ENCODE measurements at regions of chr16 and their contacts with region 1.

Region 1: DNA sequence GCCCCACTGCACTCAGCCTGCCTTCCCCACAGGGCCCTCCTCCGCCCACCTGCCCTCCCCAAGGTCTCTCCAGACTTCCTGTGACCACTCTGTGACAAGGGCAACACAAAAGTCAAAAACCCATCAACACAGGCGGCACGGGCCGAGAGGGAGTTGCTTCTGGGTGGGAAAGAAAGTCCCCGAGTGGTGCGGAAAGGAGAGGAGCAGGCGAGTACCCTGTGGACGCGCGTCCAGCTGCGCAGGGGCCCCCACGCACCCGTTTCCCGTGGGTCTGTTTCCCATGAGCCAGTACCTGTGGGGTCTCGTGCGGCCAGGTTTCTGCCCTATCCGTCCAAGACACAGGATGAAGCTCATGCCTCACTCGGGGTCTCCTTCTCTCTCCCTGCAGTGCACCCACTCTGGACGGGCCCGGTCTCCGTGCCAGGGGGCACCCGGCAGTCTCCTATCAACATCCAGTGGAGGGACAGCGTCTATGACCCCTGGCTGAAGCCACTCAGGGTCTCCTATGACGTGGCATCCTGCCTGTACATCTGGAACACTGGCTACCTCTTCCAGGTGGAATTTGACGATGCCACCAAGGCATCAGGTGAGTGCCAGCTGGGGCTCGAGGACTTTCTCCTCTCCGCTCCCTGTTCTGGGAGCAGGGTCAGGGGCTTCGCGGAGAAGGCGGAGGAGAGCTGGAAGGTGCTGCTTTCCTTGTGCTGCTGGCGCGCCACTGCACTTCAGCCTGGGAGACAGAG is 12.2 kb downstream of the CD2BP2 start:
- DNase-seq: no peak
- H3K4me3 ChIP-seq: no peak overlapping the region
- H3K27ac ChIP-seq: no peak overlapping the region
- H3K27me3 ChIP-seq: no peaks in the 10 kb centered on the region
- CTCF ChIP-seq: no peak

Region 2: GRCh38 chr16:30005341-30006094 is 337.4 kb before region 1 on chr16:
- CTCF ChIA-PET with region 1: interaction called, 12 read pairs
- POLR2A ChIA-PET with region 1: no interaction called
- DNase-seq: no peak
- H3K4me3 ChIP-seq: no peak overlapping the region
- H3K27ac ChIP-seq: no peak overlapping the region
- H3K27me3 ChIP-seq: peaks cover 15% of the 10 kb centered on the region
- CTCF ChIP-seq: peak; percentile 91

Region 3: DNA sequence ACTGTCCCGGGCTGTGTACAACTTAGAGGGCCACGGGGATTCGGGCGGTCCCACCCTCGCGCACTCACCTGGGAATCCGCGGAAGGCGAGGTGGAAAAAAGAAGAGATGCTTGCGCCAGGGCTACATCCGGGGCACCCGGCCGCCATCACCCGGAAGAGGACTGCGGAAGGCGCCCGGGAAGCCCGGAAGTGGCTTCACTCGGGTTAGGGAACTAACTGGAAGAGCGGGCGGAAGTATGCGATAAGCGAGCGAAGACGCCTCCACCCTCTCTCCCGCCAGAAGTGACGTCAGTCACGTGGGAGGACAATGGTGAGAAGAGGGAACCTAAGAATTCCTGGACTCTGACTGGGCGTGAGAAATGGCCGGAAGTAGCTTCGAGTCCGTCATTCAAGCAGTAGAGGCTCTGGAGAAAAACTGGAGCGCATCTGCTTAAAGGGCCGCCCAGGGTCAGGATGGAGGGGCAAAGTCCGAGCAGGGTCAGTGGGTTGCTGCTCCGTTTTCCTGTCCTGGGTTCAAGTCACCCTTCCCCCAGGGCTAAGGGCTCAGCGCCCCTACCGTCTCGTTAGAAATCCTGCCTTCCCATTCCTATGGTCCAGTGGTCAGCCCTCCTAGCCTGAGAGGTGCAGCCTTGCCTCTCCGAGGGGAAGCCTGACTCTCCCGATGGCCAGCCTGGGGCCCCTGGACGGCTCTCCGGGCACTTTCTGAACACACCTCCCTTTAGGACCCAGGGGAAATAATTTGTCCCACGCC is 12.4 kb after region 1 on chr16 and contains the start of gene CD2BP2:
- CTCF ChIA-PET with region 1: no interaction called
- POLR2A ChIA-PET with region 1: no interaction called
- DNase-seq: peak; percentile 99
- H3K4me3 ChIP-seq: peak within 1 kb of the TSS; percentile 98
- H3K27ac ChIP-seq: peak within 1 kb of the TSS; percentile 100
- H3K27me3 ChIP-seq: no peaks in the 10 kb centered on the region
- CTCF ChIP-seq: 0 out of 2 replicates have a peak, but pooled peaks have one; percentile 19
- polyA plus RNA-seq, gene CD2BP2: 48.9 and 49.5 TPM in 2 replicates